IMR-90 (cell line): ENCODE measurements at regions of chr2 and their contacts with region 1.

Region 1: GRCh38 chr2:221573430-221574230 is 1.5 kb upstream of the EPHA4 start:
- DNase-seq: peak; percentile 67
- ATAC-seq: peak; percentile 71
- H3K4me3 ChIP-seq: peak overlapping the region; percentile 91
- H3K27ac ChIP-seq: peak overlapping the region; percentile 85
- H3K4me1 ChIP-seq: peaks cover 3% of the 10 kb centered on the region
- H3K27me3 ChIP-seq: no peaks in the 10 kb centered on the region
- CTCF ChIP-seq: peak; percentile 95
- POLR2A ChIP-seq: no peak
- RAD21 ChIP-seq: peak; percentile 96

Region 2: GRCh38 chr2:219736209-219736608 is 1837.4 kb before region 1 on chr2:
- CTCF ChIA-PET with region 1: interaction called, 3 read pairs
- POLR2A ChIA-PET with region 1: no interaction called
- dilution Hi-C with region 1: no loop called
- in situ Hi-C with region 1: no loop called
- intact Hi-C with region 1: loop called (anchors 1 kb)
- DNase-seq: peak; percentile 81
- ATAC-seq: peak; percentile 87
- H3K4me3 ChIP-seq: no peak overlapping the region
- H3K27ac ChIP-seq: no peak overlapping the region
- H3K4me1 ChIP-seq: no peaks in the 10 kb centered on the region
- H3K27me3 ChIP-seq: 0 out of 2 replicates have a peak, but pooled peaks cover under 1% of the 10 kb centered on the region
- CTCF ChIP-seq: peak; percentile 79
- POLR2A ChIP-seq: no peak
- RAD21 ChIP-seq: peak; percentile 82

Region 3: GRCh38 chr2:220277445-220278007 is 1296.1 kb before region 1 on chr2:
- CTCF ChIA-PET with region 1: no interaction called
- POLR2A ChIA-PET with region 1: no interaction called
- dilution Hi-C with region 1: no loop called
- in situ Hi-C with region 1: no loop called
- intact Hi-C with region 1: loop called (anchors 10 kb)
- DNase-seq: peak; percentile 89
- ATAC-seq: peak; percentile 40
- H3K4me3 ChIP-seq: no peak overlapping the region
- H3K27ac ChIP-seq: peak overlapping the region; percentile 84; the same call in 1 of the 2 replicates
- H3K4me1 ChIP-seq: peaks cover 23% of the 10 kb centered on the region
- H3K27me3 ChIP-seq: no peaks in the 10 kb centered on the region
- CTCF ChIP-seq: no peak
- POLR2A ChIP-seq: no peak
- RAD21 ChIP-seq: no peak

Region 4: GRCh38 chr2:220687231-220687843 is 886.3 kb before region 1 on chr2:
- CTCF ChIA-PET with region 1: interaction called, 3 read pairs
- POLR2A ChIA-PET with region 1: no interaction called
- dilution Hi-C with region 1: no loop called
- in situ Hi-C with region 1: loop called (anchors 10 kb)
- intact Hi-C with region 1: loop called (anchors 1 kb)
- DNase-seq: peak; percentile 60
- ATAC-seq: peak; percentile 87
- H3K4me3 ChIP-seq: no peak overlapping the region
- H3K27ac ChIP-seq: no peak overlapping the region
- H3K4me1 ChIP-seq: no peaks in the 10 kb centered on the region
- H3K27me3 ChIP-seq: no peaks in the 10 kb centered on the region
- CTCF ChIP-seq: peak; percentile 74
- POLR2A ChIP-seq: no peak
- RAD21 ChIP-seq: peak; percentile 83

Region 5: GRCh38 chr2:220930271-220931076 is 643.2 kb before region 1 on chr2:
- CTCF ChIA-PET with region 1: no interaction called
- POLR2A ChIA-PET with region 1: no interaction called
- dilution Hi-C with region 1: no loop called
- in situ Hi-C with region 1: no loop called
- intact Hi-C with region 1: loop called (anchors 2 kb)
- DNase-seq: peak; percentile 92
- ATAC-seq: peak; percentile 90
- H3K4me3 ChIP-seq: no peak overlapping the region
- H3K27ac ChIP-seq: no peak overlapping the region
- H3K4me1 ChIP-seq: peaks cover 12% of the 10 kb centered on the region
- H3K27me3 ChIP-seq: peaks cover 18% of the 10 kb centered on the region
- CTCF ChIP-seq: no peak
- POLR2A ChIP-seq: no peak
- RAD21 ChIP-seq: no peak

Region 6: GRCh38 chr2:221104361-221104811 is 469.2 kb before region 1 on chr2:
- CTCF ChIA-PET with region 1: interaction called, 3 read pairs
- POLR2A ChIA-PET with region 1: no interaction called
- dilution Hi-C with region 1: no loop called
- in situ Hi-C with region 1: no loop called
- intact Hi-C with region 1: loop called (anchors 5 kb)
- DNase-seq: peak; percentile 64
- ATAC-seq: peak; percentile 85
- H3K4me3 ChIP-seq: no peak overlapping the region
- H3K27ac ChIP-seq: 0 out of 2 replicates have a peak overlapping the region, but pooled peaks have one; percentile 2
- H3K4me1 ChIP-seq: peaks cover 9% of the 10 kb centered on the region
- H3K27me3 ChIP-seq: no peaks in the 10 kb centered on the region; the same call in 1 of the 2 replicates
- CTCF ChIP-seq: 0 out of 2 replicates have a peak, but pooled peaks have one; percentile 12
- POLR2A ChIP-seq: no peak
- RAD21 ChIP-seq: no peak

Region 7: GRCh38 chr2:221502270-221503010 is 71.2 kb before region 1 on chr2:
- CTCF ChIA-PET with region 1: interaction called, 3 read pairs
- POLR2A ChIA-PET with region 1: interaction called, 3 read pairs
- dilution Hi-C with region 1: no loop called
- in situ Hi-C with region 1: no loop called
- intact Hi-C with region 1: loop called (anchors 5 kb)
- DNase-seq: peak; percentile 69
- ATAC-seq: peak; percentile 62
- H3K4me3 ChIP-seq: no peak overlapping the region; the same call in 1 of the 2 replicates
- H3K27ac ChIP-seq: peak overlapping the region; percentile 69
- H3K4me1 ChIP-seq: peaks cover 12% of the 10 kb centered on the region
- H3K27me3 ChIP-seq: no peaks in the 10 kb centered on the region
- CTCF ChIP-seq: no peak
- POLR2A ChIP-seq: no peak
- RAD21 ChIP-seq: no peak